Activated T-helper 1 cell treated with anti-CD3 and anti-CD28 coated beads, Interleukin-12 subunit alpha, Interleukin-12 subunit beta, Interleukin-2, Interleukin-4 antibody, amounts not matched to agents 30 ng/mL and 10 ng/mL and 1 ng/mL, durations not matched to agents 14 hours and 24 hours and 36 hours (primary cell): ENCODE measurements at regions of chr10 and their contacts with region 1.

Region 1: GRCh38 chr10:15209827-15210509 is 41.5 kb upstream of the NMT2 start:
- DNase-seq: peak; percentile 64
- H3K4me3 Mint-ChIP-seq: no peak overlapping the region
- H3K27ac Mint-ChIP-seq: no peak overlapping the region
- H3K4me1 Mint-ChIP-seq: peaks cover 51% of the 10 kb centered on the region
- H3K27me3 Mint-ChIP-seq: no peaks in the 10 kb centered on the region

Region 2: GRCh38 chr10:15189133-15189885 is 20.7 kb before region 1 on chr10:
- intact Hi-C with region 1: loop called (anchors 2 kb)
- DNase-seq: no peak
- H3K4me3 Mint-ChIP-seq: no peak overlapping the region
- H3K27ac Mint-ChIP-seq: no peak overlapping the region
- H3K4me1 Mint-ChIP-seq: peaks cover 37% of the 10 kb centered on the region
- H3K27me3 Mint-ChIP-seq: peaks cover 5% of the 10 kb centered on the region